Activated naive CD4-positive, alpha-beta T cell treated with anti-CD3 and anti-CD28 coated beads for 36 hours (primary cell): ENCODE measurements at regions of chr2 and their contacts with region 1.

Region 1: DNA sequence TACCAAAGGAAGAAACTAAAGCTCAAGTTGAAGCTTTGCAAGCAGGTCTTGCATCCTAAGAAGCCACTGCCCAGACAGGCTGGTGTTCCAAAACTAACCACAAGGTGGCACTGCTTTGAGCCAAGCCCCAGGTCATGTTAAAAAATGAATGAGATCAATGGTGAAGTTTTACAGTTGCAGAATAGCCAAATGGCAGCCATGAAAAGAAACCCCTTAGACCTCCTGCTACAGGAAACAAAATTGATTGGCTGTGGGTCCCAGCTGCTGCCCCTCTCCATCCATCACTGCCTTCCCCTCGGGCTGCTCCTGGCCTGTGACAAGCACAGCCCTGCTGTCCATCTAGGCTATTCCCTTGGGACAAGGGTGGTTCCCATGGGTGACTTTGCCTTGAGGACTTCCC is 20.7 kb upstream of the MREG start:
- DNase-seq: peak; percentile 94
- H3K4me3 Mint-ChIP-seq: no peak overlapping the region
- H3K27ac Mint-ChIP-seq: no peak overlapping the region
- H3K4me1 Mint-ChIP-seq: peaks cover 26% of the 10 kb centered on the region
- H3K27me3 Mint-ChIP-seq: no peaks in the 10 kb centered on the region

Region 2: GRCh38 chr2:216023055-216023648 is 10.9 kb before region 1 on chr2:
- CTCF ChIA-PET with region 1: interaction called, 40 read pairs
- intact Hi-C with region 1: no loop called
- DNase-seq: peak; percentile 67
- H3K4me3 Mint-ChIP-seq: no peak overlapping the region
- H3K27ac Mint-ChIP-seq: no peak overlapping the region
- H3K4me1 Mint-ChIP-seq: peaks cover 1% of the 10 kb centered on the region
- H3K27me3 Mint-ChIP-seq: no peaks in the 10 kb centered on the region

Region 3: DNA sequence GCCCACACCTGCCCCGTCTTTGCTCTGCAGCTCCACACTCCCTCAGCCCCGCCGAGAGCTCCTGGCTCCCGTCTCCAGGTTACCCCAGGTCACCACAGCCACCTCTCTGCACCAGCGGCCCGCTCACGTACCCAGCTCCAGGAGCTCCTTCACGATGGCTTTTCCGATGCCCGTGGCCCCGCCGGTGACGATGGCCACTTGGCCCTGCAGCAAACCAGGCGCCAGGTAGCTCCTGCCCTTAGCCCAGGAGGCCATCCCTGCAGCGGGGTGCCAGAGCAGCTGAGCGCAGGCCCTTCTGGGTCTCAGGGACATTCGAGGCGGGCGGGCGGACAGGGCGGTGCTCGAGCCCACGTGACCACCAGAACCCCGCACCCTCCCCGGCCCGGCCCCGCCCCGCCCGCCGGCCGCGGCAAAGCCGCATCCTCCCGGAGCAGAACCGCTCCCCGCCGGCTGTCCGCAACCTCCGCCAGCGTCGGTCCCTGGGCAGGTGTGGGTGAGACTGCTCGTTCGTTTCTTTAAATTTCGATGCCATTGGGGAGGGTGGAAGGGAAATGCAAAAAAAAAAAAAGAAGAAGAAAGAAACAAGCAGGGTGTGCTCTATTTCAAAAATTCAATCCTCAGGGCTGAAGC is 47.5 kb after region 1 on chr2 and contains the starts of genes PECR and TMEM169:
- CTCF ChIA-PET with region 1: interaction called, 5 read pairs
- intact Hi-C with region 1: loop called (anchors 1 kb)
- DNase-seq: peak; percentile 83
- H3K4me3 Mint-ChIP-seq: peak within 1 kb of the TSS; percentile 87
- H3K27ac Mint-ChIP-seq: peak within 1 kb of the TSS; percentile 75
- H3K4me1 Mint-ChIP-seq: peaks cover 58% of the 10 kb centered on the region
- H3K27me3 Mint-ChIP-seq: no peaks in the 10 kb centered on the region
- total RNA-seq, gene PECR: 18.8 to 20.9 TPM
- total RNA-seq, gene TMEM169: 0.57 to 0.81 TPM

Region 4: DNA sequence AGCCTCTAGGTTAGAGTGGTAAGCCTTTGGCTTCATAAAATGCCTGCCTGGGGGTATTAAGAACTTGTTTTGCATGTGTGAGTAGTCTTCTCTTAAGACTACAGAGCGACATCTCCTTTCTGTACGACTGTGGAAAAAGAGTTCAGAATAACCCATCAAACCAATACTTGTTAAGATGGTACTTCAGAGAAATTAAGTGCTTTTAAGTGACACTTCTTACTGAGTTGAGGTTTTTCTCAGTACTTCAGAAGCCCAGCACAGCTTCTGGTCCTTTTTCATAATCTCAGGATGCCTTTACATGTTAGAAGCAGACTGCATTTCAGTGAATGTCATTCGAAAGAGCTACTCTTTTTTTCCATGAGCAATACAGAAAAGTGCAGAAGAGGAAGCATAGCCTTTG is 85.9 kb after region 1 on chr2:
- CTCF ChIA-PET with region 1: interaction called, 13 read pairs
- intact Hi-C with region 1: no loop called
- DNase-seq: peak; percentile 31
- H3K4me3 Mint-ChIP-seq: peak overlapping the region; percentile 33
- H3K27ac Mint-ChIP-seq: peak overlapping the region; percentile 95
- H3K4me1 Mint-ChIP-seq: peaks cover 79% of the 10 kb centered on the region
- H3K27me3 Mint-ChIP-seq: no peaks in the 10 kb centered on the region

Region 5: GRCh38 chr2:216350214-216350789 is 316.2 kb after region 1 on chr2:
- CTCF ChIA-PET with region 1: no interaction called
- intact Hi-C with region 1: loop called (anchors 5 kb)
- DNase-seq: peak; percentile 56
- H3K4me3 Mint-ChIP-seq: no peak overlapping the region
- H3K27ac Mint-ChIP-seq: peak overlapping the region; percentile 23
- H3K4me1 Mint-ChIP-seq: peaks cover 80% of the 10 kb centered on the region
- H3K27me3 Mint-ChIP-seq: no peaks in the 10 kb centered on the region

Region 6: GRCh38 chr2:216498418-216499413 is 464.7 kb after region 1 on chr2 and contains the start of gene RPL37A:
- CTCF ChIA-PET with region 1: no interaction called
- intact Hi-C with region 1: loop called (anchors 5 kb)
- DNase-seq: peak; percentile 93
- H3K4me3 Mint-ChIP-seq: peak within 1 kb of the TSS; percentile 94
- H3K27ac Mint-ChIP-seq: peak within 1 kb of the TSS; percentile 94
- H3K4me1 Mint-ChIP-seq: peaks cover 51% of the 10 kb centered on the region
- H3K27me3 Mint-ChIP-seq: no peaks in the 10 kb centered on the region
- total RNA-seq, gene RPL37A: 4,869 to 4,871 TPM